K562 (cell line): ENCODE measurements at regions of chr9 and their contacts with region 1.

Region 1: GRCh38 chr9:127503947-127504782 is 52.9 kb downstream of the LRSAM1 start:
- DNase-seq: peak; percentile 68 to 87 (median 76)
- ATAC-seq: peak; percentile 94
- H3K4me3 ChIP-seq: no peak overlapping the region
- H3K27ac ChIP-seq: no peak overlapping the region
- H3K4me1 ChIP-seq: peaks cover 14 to 62% of the 10 kb centered on the region in 2 experiments
- H3K27me3 ChIP-seq: no peaks in the 10 kb centered on the region
- CTCF ChIP-seq: peak; percentile 92 to 94 (median 93)
- EP300 ChIP-seq: no peak
- POLR2A ChIP-seq: no peak
- RAD21 ChIP-seq: peak; percentile 90 to 95

Region 2: DNA sequence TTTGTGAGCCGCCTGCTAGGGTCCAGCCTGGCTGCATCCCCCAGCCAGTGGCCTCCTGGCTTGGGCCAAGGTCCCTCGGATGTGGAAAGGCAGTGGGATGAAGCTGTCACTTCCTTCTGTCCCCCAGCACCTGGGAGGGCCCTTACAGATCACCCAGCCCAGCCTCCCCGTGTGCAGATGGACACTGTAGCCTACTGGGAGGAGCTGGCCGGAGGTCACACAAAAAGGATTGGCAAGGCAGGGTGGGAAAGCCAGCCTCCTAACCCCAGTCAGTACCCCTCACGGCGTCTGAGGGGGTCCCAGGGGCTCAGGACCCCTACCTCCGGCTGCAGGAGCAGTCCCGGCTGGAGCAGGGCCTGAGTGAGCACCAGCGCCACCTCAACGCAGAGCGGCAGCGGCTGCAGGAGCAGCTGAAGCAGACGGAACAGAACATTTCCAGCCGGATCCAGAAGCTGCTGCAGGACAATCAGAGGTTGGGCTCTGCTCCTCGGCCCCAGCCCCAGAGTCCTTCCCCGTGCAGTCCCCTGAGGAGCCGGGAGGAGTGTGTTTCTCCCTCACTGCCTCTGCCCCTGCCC is 24.6 kb before region 1 on chr9:
- CTCF ChIA-PET with region 1: no interaction called
- POLR2A ChIA-PET with region 1: no interaction called
- in situ Hi-C with region 1: no loop called
- intact Hi-C with region 1: no loop called
- DNase-seq: no peak
- ATAC-seq: no peak
- H3K4me3 ChIP-seq: no peak overlapping the region
- H3K27ac ChIP-seq: no peak overlapping the region
- H3K4me1 ChIP-seq: peaks cover 0 to 4% of the 10 kb centered on the region in 2 experiments; a peak in 2 of 5 replicates
- H3K27me3 ChIP-seq: no peaks in the 10 kb centered on the region
- CTCF ChIP-seq: no peak
- EP300 ChIP-seq: no peak
- POLR2A ChIP-seq: no peak
- RAD21 ChIP-seq: no peak

Region 3: GRCh38 chr9:127877566-127877998 is 373.4 kb after region 1 on chr9 and contains the start of gene AK1:
- CTCF ChIA-PET with region 1: no interaction called
- POLR2A ChIA-PET with region 1: no interaction called
- in situ Hi-C with region 1: loop called (anchors 5 kb)
- intact Hi-C with region 1: no loop called
- DNase-seq: peak; percentile 68 to 82 (median 80)
- ATAC-seq: peak; percentile 85
- H3K4me3 ChIP-seq: peak within 1 kb of the TSS; percentile 46
- H3K27ac ChIP-seq: peak within 1 kb of the TSS; percentile 65
- H3K4me1 ChIP-seq: peaks cover 19 to 54% of the 10 kb centered on the region in 2 experiments; a peak in 4 of 5 replicates
- H3K27me3 ChIP-seq: no peaks in the 10 kb centered on the region
- CTCF ChIP-seq: no peak
- EP300 ChIP-seq: no peak
- POLR2A ChIP-seq: peak; percentile 55; the same call in 1 of the 2 replicates
- RAD21 ChIP-seq: no peak
- polyA plus RNA-seq, gene AK1: 10.1 to 38.9 TPM

Region 4: DNA sequence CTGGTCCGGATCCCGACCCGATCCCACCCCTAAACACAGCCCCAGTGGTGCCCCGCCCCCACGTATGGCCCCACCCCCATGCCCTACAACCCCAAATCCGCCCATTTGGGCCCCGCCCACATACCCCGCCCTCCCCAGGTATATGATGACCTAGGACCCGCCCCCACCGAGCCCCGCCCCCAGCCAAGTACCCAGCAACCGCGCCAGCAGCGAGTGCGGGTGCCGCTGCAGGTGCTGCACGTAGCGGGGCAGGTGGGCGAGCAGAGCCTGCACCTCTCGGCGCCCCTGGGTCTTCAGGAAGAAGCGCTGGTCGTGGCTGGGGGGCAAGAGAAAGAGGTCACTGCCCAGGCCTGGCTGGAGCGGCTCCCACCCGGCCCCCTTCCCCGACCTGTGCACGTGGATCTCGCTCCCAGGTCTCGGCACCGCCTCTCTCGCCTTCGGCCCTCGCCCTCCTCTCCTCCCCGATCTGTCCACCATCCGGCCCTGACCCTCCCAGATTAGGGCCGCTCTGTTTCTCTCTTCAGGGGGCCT is 423.4 kb after region 1 on chr9:
- CTCF ChIA-PET with region 1: no interaction called
- POLR2A ChIA-PET with region 1: no interaction called
- in situ Hi-C with region 1: loop called (anchors 5 kb)
- intact Hi-C with region 1: no loop called
- DNase-seq: peak; percentile 82 to 93 (median 92)
- ATAC-seq: peak; percentile 62
- H3K4me3 ChIP-seq: peak overlapping the region; percentile 35
- H3K27ac ChIP-seq: no peak overlapping the region
- H3K4me1 ChIP-seq: peaks cover 37 to 63% of the 10 kb centered on the region in 2 experiments
- H3K27me3 ChIP-seq: no peaks in the 10 kb centered on the region
- CTCF ChIP-seq: no peak
- EP300 ChIP-seq: no peak
- POLR2A ChIP-seq: no peak
- RAD21 ChIP-seq: no peak